Mammary epithelial cell (primary cell): ENCODE measurements at regions of chr22 and their contacts with region 1.

Region 1: GRCh38 chr22:43014869-43015676 is at the start of gene PACSIN2:
- DNase-seq: peak; percentile 98
- H3K4me3 ChIP-seq: peak within 1 kb of the TSS; percentile 81 to 88 (median 86)
- H3K27ac ChIP-seq: peak within 1 kb of the TSS; percentile 37
- H3K4me1 ChIP-seq: peaks cover 28% of the 10 kb centered on the region
- H3K27me3 ChIP-seq: no peaks in the 10 kb centered on the region
- CTCF ChIP-seq: no peak
- total RNA-seq, gene PACSIN2: 69.8 to 80.0 TPM

Region 2: GRCh38 chr22:42933481-42934091 is 81.5 kb before region 1 on chr22:
- CTCF ChIA-PET with region 1: no interaction called
- dilution Hi-C with region 1: loop called (anchors 5 kb)
- in situ Hi-C with region 1: no loop called
- intact Hi-C with region 1: loop called (anchors 5 kb)
- DNase-seq: peak; percentile 90
- H3K4me3 ChIP-seq: peak overlapping the region in 2 of 3 experiments; percentile 22 to 25
- H3K27ac ChIP-seq: peak overlapping the region; percentile 98
- H3K4me1 ChIP-seq: peaks cover 66% of the 10 kb centered on the region
- H3K27me3 ChIP-seq: no peaks in the 10 kb centered on the region
- CTCF ChIP-seq: no peak

Region 3: DNA sequence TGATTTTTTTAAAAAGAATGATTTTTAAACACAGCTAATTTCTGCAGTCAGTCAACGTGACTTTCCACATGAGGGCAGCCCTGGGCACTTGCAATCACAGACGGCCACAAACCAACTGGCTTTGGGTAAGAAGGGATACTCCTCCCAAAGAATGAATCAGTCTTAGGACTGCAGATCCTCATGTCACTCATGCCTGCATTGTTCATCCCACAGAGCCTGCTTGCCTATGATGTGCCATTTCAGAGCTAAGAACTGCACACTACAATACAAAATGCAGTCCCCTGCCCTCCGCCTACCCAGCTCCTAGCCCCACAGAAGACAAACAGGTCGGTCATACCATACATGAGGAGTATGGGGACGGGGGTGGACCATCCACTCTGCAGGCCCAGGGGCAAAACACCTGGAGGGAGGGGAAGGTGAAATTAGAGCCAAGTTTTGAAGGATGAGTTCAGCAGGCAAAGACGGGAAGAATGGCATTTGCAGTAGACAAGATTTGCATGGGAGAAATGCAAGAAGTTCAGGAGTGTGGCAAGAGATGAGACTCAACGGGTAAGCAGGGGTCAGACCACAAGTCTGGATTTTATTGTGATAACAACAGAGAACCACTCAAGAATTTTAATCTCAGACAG is 24.8 kb before region 1 on chr22:
- CTCF ChIA-PET with region 1: interaction called, 6 read pairs
- dilution Hi-C with region 1: no loop called
- in situ Hi-C with region 1: no loop called
- intact Hi-C with region 1: loop called (anchors 1 kb)
- DNase-seq: peak; percentile 88
- H3K4me3 ChIP-seq: no peak overlapping the region
- H3K27ac ChIP-seq: no peak overlapping the region
- H3K4me1 ChIP-seq: peaks cover 46% of the 10 kb centered on the region
- H3K27me3 ChIP-seq: no peaks in the 10 kb centered on the region
- CTCF ChIP-seq: peak; percentile 41 to 69

Region 4: DNA sequence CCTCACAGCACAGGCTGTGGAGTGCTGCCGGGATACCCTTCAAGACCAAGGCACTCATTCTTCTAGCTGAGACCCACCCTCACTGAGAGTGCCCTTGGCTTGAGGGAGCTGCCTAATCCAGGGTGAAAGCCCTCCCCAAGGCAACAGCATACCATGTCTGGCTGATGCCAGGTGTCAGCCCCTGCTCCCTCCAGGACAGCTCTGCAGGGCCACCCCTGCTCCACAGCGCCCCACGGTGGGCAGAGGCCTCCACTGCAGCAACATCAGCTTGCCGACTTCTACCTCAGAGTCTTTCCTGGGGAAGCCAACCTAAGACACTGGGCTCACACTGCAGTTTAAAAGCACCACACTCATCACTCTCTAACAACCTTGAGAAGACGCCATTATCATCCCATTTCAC is 45.1 kb after region 1 on chr22:
- CTCF ChIA-PET with region 1: no interaction called
- dilution Hi-C with region 1: loop called (anchors 5 kb)
- in situ Hi-C with region 1: no loop called
- intact Hi-C with region 1: no loop called
- DNase-seq: no peak
- H3K4me3 ChIP-seq: no peak overlapping the region
- H3K27ac ChIP-seq: no peak overlapping the region
- H3K4me1 ChIP-seq: no peaks in the 10 kb centered on the region
- H3K27me3 ChIP-seq: no peaks in the 10 kb centered on the region
- CTCF ChIP-seq: peak; percentile 59 to 64

Region 5: DNA sequence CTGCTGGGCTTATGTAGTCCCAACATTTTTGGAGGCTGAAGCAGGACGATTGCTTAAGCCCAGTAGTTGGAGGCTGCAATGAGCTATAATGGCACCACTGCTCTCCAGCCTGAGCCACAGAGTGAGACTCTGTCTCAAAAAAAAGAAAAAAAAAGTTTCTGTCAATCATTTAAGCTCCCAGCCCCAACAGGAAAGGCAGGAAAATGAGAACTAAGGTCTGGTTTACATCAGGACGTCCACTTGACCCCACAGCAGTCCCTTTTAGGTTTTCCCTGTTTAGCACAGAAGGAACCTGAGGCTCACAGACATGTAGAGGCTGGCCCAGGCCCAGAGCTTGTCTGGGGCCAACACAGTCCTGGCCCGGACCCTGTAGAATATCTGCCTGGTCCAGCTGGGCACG is 83.3 kb after region 1 on chr22:
- CTCF ChIA-PET with region 1: no interaction called
- dilution Hi-C with region 1: no loop called
- in situ Hi-C with region 1: no loop called
- intact Hi-C with region 1: no loop called
- DNase-seq: no peak
- H3K4me3 ChIP-seq: no peak overlapping the region
- H3K27ac ChIP-seq: no peak overlapping the region
- H3K4me1 ChIP-seq: peaks cover 15% of the 10 kb centered on the region
- H3K27me3 ChIP-seq: no peaks in the 10 kb centered on the region
- CTCF ChIP-seq: no peak

Region 6: GRCh38 chr22:43109921-43110443 is 94.9 kb after region 1 on chr22:
- CTCF ChIA-PET with region 1: no interaction called
- dilution Hi-C with region 1: loop called (anchors 5 kb)
- in situ Hi-C with region 1: no loop called
- intact Hi-C with region 1: no loop called
- DNase-seq: no peak
- H3K4me3 ChIP-seq: peak overlapping the region; percentile 49 to 71 (median 66)
- H3K27ac ChIP-seq: no peak overlapping the region
- H3K4me1 ChIP-seq: peaks cover 9% of the 10 kb centered on the region
- H3K27me3 ChIP-seq: no peaks in the 10 kb centered on the region
- CTCF ChIP-seq: no peak